ENCODE measurements at regions of chr6 and their contacts with region 1.

Region 1: DNA sequence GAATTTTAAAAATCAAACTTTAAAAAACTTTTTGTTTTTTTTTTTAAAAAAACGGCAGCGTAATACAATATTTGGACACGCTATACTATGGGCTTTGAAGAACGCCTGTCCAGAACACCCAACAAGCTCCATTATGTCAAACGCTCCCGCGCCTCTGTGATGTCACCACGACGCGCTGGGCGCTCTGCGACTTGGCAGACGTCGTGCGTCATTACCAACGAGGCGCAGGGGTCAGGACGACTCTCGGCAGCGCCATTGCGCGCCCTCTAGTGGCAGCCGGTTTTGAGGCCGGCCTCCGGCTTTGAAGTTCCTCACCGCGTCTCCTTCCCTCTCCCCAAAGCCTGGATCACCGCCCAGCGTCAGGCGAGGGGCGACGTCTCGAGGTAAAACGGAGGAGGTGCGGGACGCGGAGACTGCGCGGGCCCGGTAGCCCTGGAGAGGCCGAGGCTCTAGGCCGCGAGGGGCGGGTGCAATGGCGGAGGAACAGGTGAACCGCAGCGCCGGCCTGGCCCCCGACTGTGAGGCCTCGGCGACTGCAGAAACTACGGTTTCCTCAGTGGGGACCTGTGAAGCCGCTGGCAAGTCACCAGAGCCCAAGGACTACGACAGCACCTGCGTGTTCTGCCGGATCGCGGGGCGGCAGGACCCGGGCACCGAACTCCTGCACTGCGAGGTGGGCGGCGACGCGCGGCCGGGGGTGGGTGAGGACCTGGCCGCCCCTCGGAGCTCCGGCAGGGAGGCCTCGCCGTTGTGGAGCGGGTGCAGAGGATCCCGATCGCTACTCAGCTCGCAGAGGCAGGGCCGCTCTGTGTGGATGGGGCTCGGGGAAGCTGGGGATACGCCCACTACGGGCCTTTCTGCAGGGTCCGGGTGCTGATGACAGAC is at the start of gene HINT3:
- DNase-seq: peak; percentile 95
- ATAC-seq: peak; percentile 85
- H3K4me3 Mint-ChIP-seq: no peak within 1 kb of the TSS
- H3K27ac Mint-ChIP-seq: peak within 1 kb of the TSS; percentile 62
- H3K4me1 Mint-ChIP-seq: peaks cover 4% of the 10 kb centered on the region
- H3K27me3 Mint-ChIP-seq: peaks cover 3% of the 10 kb centered on the region
- CTCF ChIP-seq: peak; percentile 92
- total RNA-seq, gene HINT3: 10.6 and 11.1 TPM in 2 replicates

Region 2: DNA sequence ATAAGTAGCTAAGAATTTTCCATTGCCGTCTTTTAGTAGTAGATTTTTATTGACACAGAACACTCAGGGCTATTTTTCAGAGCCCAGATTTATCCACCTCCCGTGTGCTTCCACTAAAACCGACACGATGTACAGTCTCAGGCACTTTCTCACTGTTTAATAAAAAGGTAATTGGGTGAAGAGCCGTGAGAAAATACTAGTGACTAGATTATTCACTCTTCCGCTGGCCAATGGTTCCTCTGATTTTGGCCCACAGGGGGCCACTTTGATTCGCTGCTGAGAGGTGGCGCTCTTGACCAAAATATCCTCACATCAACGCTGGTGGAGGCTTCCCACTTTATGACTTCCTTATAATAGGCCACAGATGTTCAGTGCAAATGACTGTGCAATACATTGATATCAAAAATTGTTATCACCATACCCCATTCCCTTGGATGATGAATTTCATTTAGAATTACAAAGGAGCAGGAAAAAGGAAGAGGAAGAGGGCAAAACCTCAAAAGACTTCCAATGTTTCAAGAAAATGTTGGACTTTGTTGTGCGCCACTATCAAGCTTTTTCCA is 642.6 kb before region 1 on chr6:
- CTCF ChIA-PET with region 1: interaction called, 3 read pairs
- POLR2A ChIA-PET with region 1: no interaction called
- intact Hi-C with region 1: loop called (anchors 1 kb)
- DNase-seq: no peak
- ATAC-seq: peak; percentile 83
- H3K4me3 Mint-ChIP-seq: no peak overlapping the region
- H3K27ac Mint-ChIP-seq: no peak overlapping the region
- H3K4me1 Mint-ChIP-seq: peaks cover 2% of the 10 kb centered on the region
- H3K27me3 Mint-ChIP-seq: peaks cover 6% of the 10 kb centered on the region
- CTCF ChIP-seq: peak; percentile 70

Region 3: DNA sequence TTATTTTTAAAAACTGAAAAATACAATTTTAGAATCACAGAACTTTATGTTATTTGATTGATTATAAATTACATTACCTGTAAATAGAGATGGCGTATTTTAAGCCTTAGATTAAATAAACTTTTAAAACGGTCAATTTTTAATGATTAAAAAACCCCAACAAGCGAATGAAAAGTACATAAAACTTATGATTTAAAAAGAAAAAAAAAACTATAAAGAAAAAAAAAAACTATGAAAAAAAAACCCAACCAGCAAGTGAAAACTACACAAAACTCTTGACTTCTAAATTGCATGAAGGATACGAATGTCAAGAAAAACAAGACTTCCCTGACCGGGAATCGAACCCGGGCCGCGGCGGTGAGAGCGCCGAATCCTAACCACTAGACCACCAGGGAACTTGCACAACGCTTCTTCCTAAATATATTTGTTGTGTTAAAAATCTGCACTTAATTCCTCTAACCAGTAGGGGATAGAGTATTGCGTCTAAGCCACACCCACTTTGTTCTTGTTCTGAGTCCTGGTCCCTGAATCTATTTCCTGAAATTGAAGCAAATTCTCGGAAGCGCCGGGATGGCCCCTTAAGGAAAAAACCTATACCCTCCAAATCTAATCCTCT is 176.7 kb before region 1 on chr6:
- CTCF ChIA-PET with region 1: interaction called, 24 read pairs
- POLR2A ChIA-PET with region 1: interaction called, 43 read pairs
- intact Hi-C with region 1: loop called (anchors 1 kb)
- DNase-seq: peak; percentile 77
- ATAC-seq: peak; percentile 79
- H3K4me3 Mint-ChIP-seq: no peak overlapping the region
- H3K27ac Mint-ChIP-seq: no peak overlapping the region
- H3K4me1 Mint-ChIP-seq: peaks cover 4% of the 10 kb centered on the region
- H3K27me3 Mint-ChIP-seq: no peaks in the 10 kb centered on the region
- CTCF ChIP-seq: no peak

Region 4: DNA sequence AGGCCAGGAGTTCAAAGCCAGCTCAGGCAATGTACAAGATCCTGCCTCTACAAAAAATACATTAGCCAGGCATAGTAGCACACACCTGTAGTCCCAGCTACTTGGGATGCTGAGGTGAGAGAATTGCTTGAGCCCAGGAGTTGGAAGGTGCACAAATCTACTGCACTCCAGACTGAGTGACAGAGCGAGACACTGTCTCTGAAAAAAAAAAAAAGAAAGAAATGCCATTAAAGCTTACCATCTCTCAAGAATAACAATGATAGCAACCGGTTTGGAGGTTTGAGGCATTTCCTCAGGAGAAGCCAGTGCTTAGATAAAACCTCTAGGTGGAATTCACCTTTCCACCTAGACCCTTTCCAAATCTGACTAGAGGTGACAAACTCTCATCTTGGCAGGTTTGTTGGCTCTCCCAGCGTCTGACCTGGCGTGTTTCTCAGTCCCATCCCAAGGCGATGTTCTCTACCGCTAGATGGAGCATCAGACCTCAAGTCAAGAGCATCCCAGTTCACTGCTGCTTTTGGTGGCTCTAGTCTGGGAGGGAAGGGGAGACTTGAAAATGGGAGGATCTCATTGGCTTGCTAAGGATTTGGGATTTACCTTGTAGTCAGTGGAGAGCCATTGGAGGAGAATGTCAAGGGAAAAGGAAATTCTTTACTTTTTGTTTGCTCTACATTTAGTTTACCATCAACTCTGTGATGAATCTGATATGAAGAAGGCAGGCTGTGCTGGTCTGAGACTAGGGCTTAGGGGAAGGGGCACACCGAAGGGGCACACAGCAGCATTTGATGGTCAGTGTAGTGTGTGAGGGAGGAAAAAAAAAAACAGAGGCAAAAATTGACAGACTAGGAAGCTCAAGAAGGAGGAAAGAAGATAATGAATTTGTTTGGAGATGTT is 98.1 kb before region 1 on chr6:
- CTCF ChIA-PET with region 1: no interaction called
- POLR2A ChIA-PET with region 1: interaction called, 3 read pairs
- intact Hi-C with region 1: loop called (anchors 5 kb)
- DNase-seq: no peak
- ATAC-seq: peak; percentile 45
- H3K4me3 Mint-ChIP-seq: no peak overlapping the region
- H3K27ac Mint-ChIP-seq: no peak overlapping the region
- H3K4me1 Mint-ChIP-seq: no peaks in the 10 kb centered on the region
- H3K27me3 Mint-ChIP-seq: no peaks in the 10 kb centered on the region
- CTCF ChIP-seq: no peak

Region 5: DNA sequence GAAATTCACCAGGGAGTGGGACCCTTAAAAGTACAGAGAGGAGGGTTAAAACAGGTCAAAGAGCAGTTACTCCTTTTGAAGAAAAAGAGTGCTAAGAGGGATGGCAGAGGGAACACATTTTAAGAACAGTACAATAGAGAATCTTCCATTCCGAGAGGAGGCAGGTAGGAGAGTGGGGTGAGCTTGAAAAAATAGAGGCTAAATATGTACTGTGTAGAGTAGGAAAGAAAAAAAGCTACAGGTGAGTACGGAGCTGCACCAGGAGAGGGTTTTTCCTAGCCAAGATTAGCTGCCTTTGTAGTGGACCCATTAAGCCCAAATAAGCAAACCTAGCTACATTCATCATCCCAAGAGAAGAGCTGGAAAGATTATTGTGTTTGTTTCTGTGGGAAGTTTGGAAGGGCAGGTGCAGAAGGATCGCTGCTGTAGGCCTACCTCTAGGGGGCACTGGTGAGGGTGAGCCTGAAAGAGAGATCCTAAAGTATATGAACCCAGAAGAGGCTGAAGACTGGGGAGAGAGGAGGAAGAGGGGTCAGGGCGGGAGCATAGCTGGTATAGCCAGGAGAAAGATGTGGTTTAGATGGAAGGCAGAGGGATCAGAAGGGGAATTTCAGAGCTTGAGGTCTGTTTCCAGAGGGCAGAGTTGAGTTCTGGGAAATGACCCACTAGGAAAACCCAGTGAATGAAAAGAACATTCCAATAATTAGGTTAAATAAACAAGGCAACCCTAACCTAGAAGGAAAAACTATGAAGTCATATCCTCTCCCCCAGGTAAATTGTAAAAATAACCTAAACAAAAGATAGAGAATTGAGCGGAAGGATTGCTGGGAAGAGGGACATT is 50.4 kb before region 1 on chr6:
- CTCF ChIA-PET with region 1: interaction called, 11 read pairs
- POLR2A ChIA-PET with region 1: no interaction called
- intact Hi-C with region 1: loop called (anchors 1 kb)
- DNase-seq: peak; percentile 23
- ATAC-seq: peak; percentile 75
- H3K4me3 Mint-ChIP-seq: no peak overlapping the region
- H3K27ac Mint-ChIP-seq: no peak overlapping the region
- H3K4me1 Mint-ChIP-seq: peaks cover 4% of the 10 kb centered on the region
- H3K27me3 Mint-ChIP-seq: no peaks in the 10 kb centered on the region
- CTCF ChIP-seq: no peak

Region 6: DNA sequence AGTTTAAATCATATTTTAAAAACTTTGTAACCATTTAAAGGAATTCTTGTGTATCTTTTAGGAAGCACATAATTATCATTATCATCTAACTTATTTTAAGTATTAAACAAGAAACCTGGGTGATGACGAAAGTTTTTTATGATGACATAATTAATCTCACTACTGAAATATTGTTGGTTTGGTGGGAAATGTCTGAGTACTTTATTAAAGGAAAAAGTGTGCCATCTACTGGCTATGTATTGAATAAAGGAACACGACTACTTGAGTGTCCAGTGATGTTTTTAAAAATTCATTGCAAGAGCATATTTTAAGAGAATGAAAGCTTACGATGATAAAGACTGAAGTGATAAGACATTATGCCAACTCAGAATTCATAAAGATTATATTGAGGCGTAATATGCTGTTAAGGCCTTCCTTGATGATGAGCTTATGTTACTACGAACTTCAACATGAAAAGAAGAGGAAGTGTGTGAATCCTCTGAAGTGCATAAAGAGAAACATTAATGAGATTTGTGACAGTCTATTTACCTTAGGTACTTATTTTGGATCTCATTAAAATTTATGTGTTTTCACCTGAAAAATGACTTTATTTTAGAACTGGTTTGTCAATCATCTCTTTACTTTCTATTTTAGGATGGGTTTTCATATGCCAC is 17.6 kb after region 1 on chr6:
- CTCF ChIA-PET with region 1: interaction called, 12 read pairs
- POLR2A ChIA-PET with region 1: interaction called, 7 read pairs
- intact Hi-C with region 1: loop called (anchors 1 kb)
- DNase-seq: no peak
- ATAC-seq: peak; percentile 58
- H3K4me3 Mint-ChIP-seq: no peak overlapping the region
- H3K27ac Mint-ChIP-seq: peak overlapping the region; percentile 5
- H3K4me1 Mint-ChIP-seq: peaks cover 15% of the 10 kb centered on the region
- H3K27me3 Mint-ChIP-seq: no peaks in the 10 kb centered on the region
- CTCF ChIP-seq: no peak

Measured in activated B cell treated with CpG ODN at 0.5 μM for 24 hours (primary cell).